ENCODE measurements at regions of chr13 and their contacts with region 1.

Region 1: DNA sequence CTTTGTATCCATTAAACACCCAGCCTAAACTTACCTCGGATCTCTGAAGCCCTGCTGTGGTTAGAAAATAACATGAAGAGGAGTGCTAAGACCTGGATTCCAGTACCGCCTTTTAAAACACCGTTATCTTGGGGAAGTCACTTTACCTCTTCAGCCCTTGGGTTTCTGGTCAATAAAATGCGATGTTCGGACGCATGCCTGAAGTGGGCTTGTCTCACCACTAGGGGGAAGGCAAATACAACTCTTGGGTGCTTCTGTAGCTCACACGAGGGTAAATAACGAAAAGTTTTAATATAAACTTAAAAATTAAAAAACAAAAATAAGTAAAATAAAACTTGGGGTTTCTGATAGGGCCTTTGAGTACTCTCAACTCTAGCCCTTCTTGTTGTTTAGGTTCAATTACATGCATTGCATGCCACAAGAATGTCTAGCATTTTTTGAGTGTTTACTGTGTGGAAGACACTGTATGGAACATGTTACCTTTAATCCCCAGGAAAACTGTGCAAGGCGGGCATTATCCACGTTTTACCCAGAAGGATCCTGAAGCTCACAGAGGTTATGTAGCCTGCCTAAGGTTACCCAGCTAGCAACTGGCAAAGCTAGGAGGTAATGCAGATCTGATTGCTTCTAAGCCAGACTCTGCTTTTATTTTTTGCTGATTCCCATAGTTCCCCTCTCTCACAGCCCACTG is 240.4 kb downstream of the LMO7 start:
- DNase-seq: peak; percentile 73
- ATAC-seq: peak; percentile 81
- H3K4me3 ChIP-seq: no peak overlapping the region
- H3K27ac ChIP-seq: no peak overlapping the region; the same call in 1 of the 2 replicates
- H3K4me1 ChIP-seq: peaks cover 5% of the 10 kb centered on the region
- H3K27me3 ChIP-seq: peaks cover 4% of the 10 kb centered on the region
- CTCF ChIP-seq: peak; percentile 92
- POLR2A ChIP-seq: no peak
- RAD21 ChIP-seq: peak; percentile 93

Region 2: DNA sequence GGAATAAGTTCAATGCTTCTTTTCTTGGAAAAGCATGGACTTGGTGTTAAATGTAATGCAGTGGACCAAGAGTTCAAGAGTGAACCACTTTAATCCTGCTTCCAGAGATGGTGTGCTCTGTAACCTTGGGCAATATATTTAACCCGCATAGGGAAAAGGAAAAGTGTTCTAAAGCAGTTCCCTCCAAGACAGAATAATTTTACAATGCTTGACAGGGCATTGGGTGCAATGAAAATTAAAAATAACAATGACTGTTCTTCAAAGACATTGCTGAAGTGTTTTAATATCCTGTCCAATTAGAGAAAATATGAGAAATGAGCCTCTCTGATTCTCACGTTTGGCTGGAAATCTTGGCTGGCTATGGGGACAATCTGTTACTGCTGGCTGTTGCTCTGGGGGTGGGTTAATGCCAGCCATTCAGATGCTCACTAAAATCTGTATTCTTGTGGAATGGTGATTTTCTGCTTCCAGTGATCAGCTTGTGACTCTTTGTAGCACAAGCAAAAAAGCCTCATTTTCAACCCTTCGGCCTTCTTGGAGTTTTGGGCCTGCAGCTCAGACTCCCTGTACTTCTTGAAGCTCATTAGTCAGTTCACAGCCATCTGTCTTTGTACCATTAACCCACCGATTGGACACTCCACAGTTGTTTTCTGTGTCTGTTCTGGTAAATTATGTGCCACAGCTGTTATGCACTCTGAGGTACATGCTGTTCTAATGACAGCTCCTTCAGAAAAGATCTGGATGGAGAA is 70.2 kb after region 1 on chr13:
- CTCF ChIA-PET with region 1: no interaction called
- POLR2A ChIA-PET with region 1: no interaction called
- dilution Hi-C with region 1: no loop called
- in situ Hi-C with region 1: no loop called
- intact Hi-C with region 1: no loop called
- DNase-seq: no peak
- ATAC-seq: no peak
- H3K4me3 ChIP-seq: no peak overlapping the region
- H3K27ac ChIP-seq: no peak overlapping the region
- H3K4me1 ChIP-seq: no peaks in the 10 kb centered on the region
- H3K27me3 ChIP-seq: peaks cover 10% of the 10 kb centered on the region; the same call in 1 of the 2 replicates
- CTCF ChIP-seq: no peak
- POLR2A ChIP-seq: no peak
- RAD21 ChIP-seq: no peak

Region 3: GRCh38 chr13:76225815-76226489 is 349.4 kb after region 1 on chr13:
- CTCF ChIA-PET with region 1: no interaction called
- POLR2A ChIA-PET with region 1: no interaction called
- dilution Hi-C with region 1: no loop called
- in situ Hi-C with region 1: no loop called
- intact Hi-C with region 1: loop called (anchors 2 kb)
- DNase-seq: peak; percentile 90
- ATAC-seq: peak; percentile 83
- H3K4me3 ChIP-seq: no peak overlapping the region
- H3K27ac ChIP-seq: peak overlapping the region; percentile 51; the same call in 1 of the 2 replicates
- H3K4me1 ChIP-seq: peaks cover 4% of the 10 kb centered on the region; the same call in 1 of the 2 replicates
- H3K27me3 ChIP-seq: no peaks in the 10 kb centered on the region
- CTCF ChIP-seq: no peak
- POLR2A ChIP-seq: no peak
- RAD21 ChIP-seq: no peak

Region 4: GRCh38 chr13:76307142-76307541 is 430.6 kb after region 1 on chr13:
- CTCF ChIA-PET with region 1: no interaction called
- POLR2A ChIA-PET with region 1: no interaction called
- dilution Hi-C with region 1: no loop called
- in situ Hi-C with region 1: no loop called
- intact Hi-C with region 1: loop called (anchors 5 kb)
- DNase-seq: peak; percentile 79
- ATAC-seq: peak; percentile 97
- H3K4me3 ChIP-seq: no peak overlapping the region
- H3K27ac ChIP-seq: peak overlapping the region; percentile 12; the same call in 1 of the 2 replicates
- H3K4me1 ChIP-seq: peaks cover 2% of the 10 kb centered on the region; the same call in 1 of the 2 replicates
- H3K27me3 ChIP-seq: no peaks in the 10 kb centered on the region
- CTCF ChIP-seq: 0 out of 2 replicates have a peak, but pooled peaks have one; percentile 10
- POLR2A ChIP-seq: no peak
- RAD21 ChIP-seq: peak; percentile 23; the same call in 1 of the 2 replicates

Region 5: DNA sequence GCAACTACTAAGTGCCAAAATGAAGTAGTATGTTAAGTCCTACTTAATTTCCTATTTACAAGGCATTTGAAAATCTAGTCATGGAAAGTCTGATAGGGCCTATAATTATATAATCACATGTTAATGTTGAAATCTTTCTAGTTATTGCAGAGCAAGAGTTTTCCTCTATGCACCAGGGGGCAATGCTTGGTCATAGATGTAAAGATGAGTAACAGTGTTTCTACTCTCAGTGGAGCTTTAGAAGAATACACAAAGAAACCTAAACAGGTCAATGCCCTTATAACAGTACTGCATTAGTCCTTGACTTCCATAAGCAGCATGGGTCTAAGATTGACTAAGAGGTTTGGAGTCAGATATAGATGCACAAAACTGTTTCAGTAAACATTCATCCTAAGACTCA is 791.0 kb after region 1 on chr13:
- CTCF ChIA-PET with region 1: interaction called, 3 read pairs
- POLR2A ChIA-PET with region 1: no interaction called
- dilution Hi-C with region 1: no loop called
- in situ Hi-C with region 1: no loop called
- intact Hi-C with region 1: loop called (anchors 2 kb)
- DNase-seq: peak; percentile 77
- ATAC-seq: peak; percentile 94
- H3K4me3 ChIP-seq: no peak overlapping the region
- H3K27ac ChIP-seq: no peak overlapping the region
- H3K4me1 ChIP-seq: no peaks in the 10 kb centered on the region
- H3K27me3 ChIP-seq: peaks cover 2% of the 10 kb centered on the region; the same call in 1 of the 2 replicates
- CTCF ChIP-seq: peak; percentile 82
- POLR2A ChIP-seq: no peak
- RAD21 ChIP-seq: peak; percentile 86